Mammary epithelial cell (primary cell): ENCODE measurements at regions of chr7 and their contacts with region 1.

Region 1: DNA sequence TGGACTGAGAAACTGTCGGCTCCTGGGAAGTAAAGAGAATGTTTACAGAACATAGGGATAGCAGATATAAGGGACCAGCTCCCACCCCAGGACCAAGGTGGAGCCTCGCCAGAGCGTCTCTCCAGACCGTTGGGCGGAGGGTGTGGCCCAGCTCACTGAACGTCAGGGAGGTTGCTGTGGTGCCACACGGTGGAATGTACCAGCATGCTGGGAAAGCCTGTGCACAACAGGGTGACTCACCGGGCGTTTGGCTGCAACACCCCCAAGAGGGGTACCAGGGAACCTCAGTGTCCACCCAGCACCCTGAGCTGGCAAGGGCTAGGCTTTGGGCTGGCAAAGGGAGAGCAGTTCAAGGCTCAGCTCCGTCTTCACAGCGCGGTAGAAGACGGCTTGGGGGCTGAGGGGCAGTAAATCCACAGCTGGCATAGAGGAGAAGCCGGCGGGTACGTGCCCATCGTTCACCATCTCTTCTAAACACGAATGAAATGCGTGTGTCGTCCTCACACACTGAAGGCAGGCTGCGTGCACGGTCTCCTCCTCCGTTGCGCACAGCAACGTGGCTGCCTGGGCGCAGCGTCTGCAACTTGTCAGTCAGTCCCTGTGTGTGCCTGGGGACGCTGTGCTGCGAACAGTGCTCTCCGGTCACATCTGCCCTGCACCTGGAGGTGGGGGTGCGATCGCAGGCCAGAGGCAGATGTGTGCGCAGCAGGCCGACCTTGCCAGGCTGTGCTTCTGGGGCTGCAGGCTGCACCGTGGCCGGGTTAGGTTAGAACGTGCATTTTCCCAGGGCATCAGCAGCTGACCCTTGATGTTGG is 8.5 kb upstream of the GET4 start:
- DNase-seq: peak; percentile 53
- H3K4me3 ChIP-seq: no peak overlapping the region
- H3K27ac ChIP-seq: peak overlapping the region; percentile 60
- H3K4me1 ChIP-seq: peaks cover 17% of the 10 kb centered on the region
- H3K27me3 ChIP-seq: no peaks in the 10 kb centered on the region
- CTCF ChIP-seq: peak in 1 of 2 donors; percentile 39

Region 2: DNA sequence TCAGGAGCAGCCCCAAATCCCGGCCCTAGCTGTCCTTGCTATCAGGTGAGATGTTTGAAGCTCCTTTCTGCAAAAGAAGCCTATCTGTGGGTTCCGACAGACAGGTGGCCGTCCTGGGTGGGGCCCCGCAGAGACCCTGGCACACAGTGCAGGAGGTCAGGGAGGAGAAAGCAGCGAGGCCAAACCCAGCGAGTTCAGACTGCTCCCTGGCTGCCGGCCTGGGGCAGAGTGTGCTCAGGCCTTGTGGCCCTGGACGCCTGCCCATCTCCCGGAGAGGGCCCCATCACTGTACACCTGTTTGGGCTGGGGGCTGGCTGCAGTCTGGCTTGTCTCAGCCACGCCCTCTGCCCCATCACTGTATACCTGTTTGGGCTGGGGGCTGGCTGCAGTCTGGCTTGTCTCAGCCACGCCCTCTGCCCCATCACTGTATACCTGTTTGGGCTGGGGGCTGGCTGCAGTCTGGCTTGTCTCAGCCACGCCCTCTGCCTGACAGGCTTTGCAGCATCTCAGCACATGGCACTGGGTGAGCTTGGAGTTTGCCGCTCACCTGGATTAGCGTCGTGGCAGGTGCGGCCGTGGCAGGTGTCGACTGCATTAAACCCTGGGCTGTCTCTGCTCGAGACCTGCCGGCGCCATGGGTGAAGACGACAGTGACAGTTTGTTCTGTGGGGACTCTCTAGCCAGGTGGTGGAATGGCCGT is 129.0 kb before region 1 on chr7:
- CTCF ChIA-PET with region 1: no interaction called
- dilution Hi-C with region 1: no loop called
- in situ Hi-C with region 1: no loop called
- intact Hi-C with region 1: no loop called
- DNase-seq: no peak
- H3K4me3 ChIP-seq: no peak overlapping the region
- H3K27ac ChIP-seq: no peak overlapping the region
- H3K4me1 ChIP-seq: no peaks in the 10 kb centered on the region
- H3K27me3 ChIP-seq: no peaks in the 10 kb centered on the region
- CTCF ChIP-seq: no peak

Region 3: GRCh38 chr7:794671-795329 is 73.1 kb before region 1 on chr7:
- CTCF ChIA-PET with region 1: no interaction called
- dilution Hi-C with region 1: no loop called
- in situ Hi-C with region 1: loop called (anchors 5 kb)
- intact Hi-C with region 1: no loop called
- DNase-seq: no peak
- H3K4me3 ChIP-seq: no peak overlapping the region
- H3K27ac ChIP-seq: no peak overlapping the region
- H3K4me1 ChIP-seq: no peaks in the 10 kb centered on the region
- H3K27me3 ChIP-seq: no peaks in the 10 kb centered on the region
- CTCF ChIP-seq: no peak

Region 4: DNA sequence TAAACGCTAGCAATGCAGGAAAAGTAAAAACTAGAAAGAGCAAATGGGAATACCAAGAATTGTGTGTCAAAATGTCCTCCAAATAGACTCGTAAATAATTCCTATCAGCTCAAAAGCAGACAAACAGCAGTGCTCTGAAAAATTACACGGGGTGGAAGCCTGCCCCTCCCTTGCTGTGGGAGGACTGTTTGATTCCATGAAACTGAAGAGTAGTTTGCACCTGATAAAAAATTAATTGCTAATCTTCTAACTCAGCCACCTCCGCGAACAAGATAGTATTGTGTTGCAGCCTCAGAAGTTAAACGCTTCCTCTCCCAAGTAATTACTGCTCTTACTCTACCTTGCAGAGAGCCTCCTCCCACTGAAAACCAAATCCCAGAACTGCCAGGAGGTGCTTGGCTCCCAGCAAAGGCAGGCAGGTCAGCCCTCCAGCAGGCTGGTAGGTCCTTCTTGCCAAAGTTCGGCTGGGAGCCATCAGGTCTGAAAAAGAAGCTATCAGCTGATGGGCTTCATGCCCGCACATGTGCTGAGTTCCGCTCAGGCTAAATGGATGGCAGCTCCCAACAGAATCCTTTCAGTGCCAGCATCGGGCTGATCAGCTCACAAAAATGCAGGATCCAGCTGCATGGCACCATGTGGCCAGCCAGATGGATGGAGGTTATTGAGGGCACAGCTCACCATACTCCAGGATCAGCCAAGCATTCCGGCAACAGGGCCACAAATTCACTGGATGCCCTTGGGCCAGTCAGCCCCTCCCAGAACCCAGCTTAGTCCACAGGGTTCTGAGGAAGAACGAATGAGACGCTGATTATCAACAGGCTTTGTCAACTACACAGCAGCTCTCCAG is 1327.7 kb after region 1 on chr7:
- CTCF ChIA-PET with region 1: no interaction called
- dilution Hi-C with region 1: no loop called
- in situ Hi-C with region 1: no loop called
- intact Hi-C with region 1: no loop called
- DNase-seq: no peak
- H3K4me3 ChIP-seq: no peak overlapping the region
- H3K27ac ChIP-seq: no peak overlapping the region
- H3K4me1 ChIP-seq: peaks cover 20% of the 10 kb centered on the region
- H3K27me3 ChIP-seq: no peaks in the 10 kb centered on the region
- CTCF ChIP-seq: no peak